Right cardiac atrium (tissue), 5 donors: ENCODE measurements at regions of chr2 and their contacts with region 1.

Region 1: GRCh38 chr2:231713730-231714430 is 5.6 kb downstream of the PTMA start:
- DNase-seq: peak; percentile 90 to 96 (median 96)
- ATAC-seq: peak; percentile 44 to 47
- H3K4me3 ChIP-seq: no peak overlapping the region
- H3K27ac ChIP-seq: peak overlapping the region; percentile 55
- H3K4me1 ChIP-seq: peaks cover 10% of the 10 kb centered on the region
- H3K27me3 ChIP-seq: no peaks in the 10 kb centered on the region

Region 2: GRCh38 chr2:231674587-231675338 is 39.1 kb before region 1 on chr2:
- intact Hi-C with region 1: loop called in 3 of 4 experiments (anchors 1 to 2 kb)
- DNase-seq: peak; percentile 72 to 91 (median 87)
- ATAC-seq: peak; percentile 45 to 53
- H3K4me3 ChIP-seq: no peak overlapping the region
- H3K27ac ChIP-seq: peak overlapping the region; percentile 32
- H3K4me1 ChIP-seq: no peaks in the 10 kb centered on the region
- H3K27me3 ChIP-seq: no peaks in the 10 kb centered on the region

Region 3: DNA sequence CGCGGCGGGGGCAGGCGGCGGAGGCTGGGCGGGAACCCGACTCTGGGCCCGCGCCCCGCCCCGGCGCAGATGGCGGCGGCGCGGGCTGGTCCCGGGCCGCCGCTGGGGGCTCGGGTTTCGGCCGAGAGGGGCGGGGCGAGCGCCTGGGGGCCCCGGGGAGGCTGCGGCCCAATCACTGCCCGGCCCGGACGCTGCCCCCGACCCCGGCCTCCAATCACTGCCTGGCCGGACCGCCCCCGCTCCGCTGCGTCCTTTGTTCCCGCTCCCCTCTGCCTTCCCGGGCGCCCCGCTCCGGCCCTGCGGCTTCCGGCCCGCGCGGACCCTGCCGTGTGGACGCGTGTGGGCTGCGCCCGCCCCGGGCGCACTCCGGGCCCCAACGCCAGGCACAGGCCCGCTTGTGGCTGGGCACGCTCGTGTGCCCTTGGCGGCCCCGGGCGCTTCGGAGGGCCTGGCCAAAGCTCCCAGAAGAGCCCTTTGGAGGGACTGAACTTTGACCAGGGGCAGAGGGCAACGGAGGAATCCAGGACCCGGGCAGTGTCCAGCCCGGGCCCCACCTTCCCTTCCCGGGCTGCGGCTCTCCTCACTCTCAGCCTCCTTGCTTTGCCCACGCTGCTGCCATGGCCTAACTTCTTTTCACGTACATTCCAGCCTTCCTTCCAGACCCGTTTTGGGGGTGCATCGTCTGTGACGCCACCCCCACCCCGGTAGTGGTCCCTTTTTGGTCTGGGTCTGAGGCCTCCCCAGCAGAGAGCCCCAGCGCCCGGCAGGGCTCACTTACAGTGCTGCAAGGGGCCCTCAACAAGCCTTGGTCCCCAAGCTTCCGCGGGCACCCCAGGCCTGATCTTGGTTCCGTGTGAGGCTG is 32.7 kb before region 1 on chr2:
- intact Hi-C with region 1: loop called (anchors 1 to 2 kb)
- DNase-seq: peak; percentile 91 to 96 (median 96)
- ATAC-seq: peak; percentile 89 to 92
- H3K4me3 ChIP-seq: peak overlapping the region; percentile 55
- H3K27ac ChIP-seq: peak overlapping the region; percentile 89
- H3K4me1 ChIP-seq: no peaks in the 10 kb centered on the region
- H3K27me3 ChIP-seq: no peaks in the 10 kb centered on the region